ENCODE measurements at regions of chr11 and their contacts with region 1.

Region 1: GRCh38 chr11:72752088-72752914 is at the start of gene ARAP1:
- DNase-seq: peak; percentile 67
- H3K4me3 Mint-ChIP-seq: peak within 1 kb of the TSS; percentile 91
- H3K27ac Mint-ChIP-seq: peak within 1 kb of the TSS; percentile 91
- H3K4me1 Mint-ChIP-seq: peaks cover 42% of the 10 kb centered on the region
- H3K27me3 Mint-ChIP-seq: no peaks in the 10 kb centered on the region
- total RNA-seq, gene ARAP1: 78.8 and 88.6 TPM in 2 replicates

Region 2: DNA sequence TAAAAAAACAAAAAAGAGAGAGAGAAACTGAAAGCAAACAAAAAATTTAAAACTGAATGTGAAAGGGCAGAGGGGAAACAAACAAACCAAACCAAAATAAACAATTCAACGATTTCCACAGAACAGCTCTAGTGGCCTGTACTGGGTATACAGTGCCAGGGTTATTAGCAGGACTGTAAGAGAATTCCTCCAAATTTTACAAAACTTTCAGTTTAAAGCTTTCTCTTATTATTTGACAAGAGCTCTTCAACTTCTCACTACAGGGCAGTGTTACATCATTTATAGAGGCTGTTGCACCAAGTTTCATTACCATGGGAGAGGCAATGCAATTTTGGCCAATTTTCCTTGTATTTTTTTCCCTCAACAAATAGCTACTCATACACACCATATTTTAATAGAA is 273.6 kb before region 1 on chr11:
- intact Hi-C with region 1: no loop called
- DNase-seq: no peak
- H3K4me3 Mint-ChIP-seq: no peak overlapping the region
- H3K27ac Mint-ChIP-seq: no peak overlapping the region
- H3K4me1 Mint-ChIP-seq: peaks cover 4% of the 10 kb centered on the region
- H3K27me3 Mint-ChIP-seq: peaks cover 15% of the 10 kb centered on the region

Region 3: DNA sequence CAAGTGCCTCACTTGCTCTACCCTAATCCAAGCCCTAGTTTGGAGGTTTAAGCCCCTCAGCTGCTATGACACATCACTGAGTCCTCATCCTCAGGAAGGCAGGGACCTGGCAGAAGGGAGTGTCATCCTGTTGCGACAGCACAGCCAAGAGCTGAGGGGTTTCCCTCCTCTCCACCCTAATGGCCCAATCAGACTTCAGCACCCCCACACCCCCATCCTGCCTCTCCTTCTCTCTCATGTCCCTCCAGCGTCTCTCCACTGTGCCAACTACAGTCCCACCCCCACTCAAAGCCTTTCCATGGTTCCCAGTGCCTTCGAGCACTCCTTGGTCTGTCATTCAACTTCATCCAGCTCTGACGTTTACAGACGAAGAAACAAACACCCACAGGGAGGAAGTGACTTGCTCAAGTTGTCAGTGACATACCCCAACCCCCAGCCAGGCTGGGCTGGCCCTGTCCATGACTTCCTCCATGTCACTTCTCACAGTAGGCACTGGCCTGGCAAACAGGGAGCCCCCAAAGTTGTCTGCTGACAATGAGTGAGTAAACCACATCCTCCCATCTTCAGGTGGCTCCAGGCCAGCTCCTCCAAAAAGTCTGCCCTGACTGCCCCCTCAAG is 15.7 kb before region 1 on chr11:
- intact Hi-C with region 1: loop called (anchors 1 kb)
- DNase-seq: peak; percentile 64
- H3K4me3 Mint-ChIP-seq: peak overlapping the region; percentile 67
- H3K27ac Mint-ChIP-seq: peak overlapping the region; percentile 99
- H3K4me1 Mint-ChIP-seq: peaks cover 47% of the 10 kb centered on the region
- H3K27me3 Mint-ChIP-seq: no peaks in the 10 kb centered on the region

Region 4: GRCh38 chr11:72762641-72763304 is 10.5 kb after region 1 on chr11:
- intact Hi-C with region 1: loop called (anchors 1 kb)
- DNase-seq: no peak
- H3K4me3 Mint-ChIP-seq: peak overlapping the region; percentile 27
- H3K27ac Mint-ChIP-seq: peak overlapping the region; percentile 25
- H3K4me1 Mint-ChIP-seq: peaks cover 32% of the 10 kb centered on the region
- H3K27me3 Mint-ChIP-seq: no peaks in the 10 kb centered on the region

Region 5: GRCh38 chr11:72772978-72773690 is 20.8 kb after region 1 on chr11:
- intact Hi-C with region 1: no loop called
- DNase-seq: no peak
- H3K4me3 Mint-ChIP-seq: no peak overlapping the region
- H3K27ac Mint-ChIP-seq: no peak overlapping the region
- H3K4me1 Mint-ChIP-seq: peaks cover 7% of the 10 kb centered on the region
- H3K27me3 Mint-ChIP-seq: peaks cover 5% of the 10 kb centered on the region

Region 6: GRCh38 chr11:72885749-72886609 is 133.7 kb after region 1 on chr11:
- intact Hi-C with region 1: no loop called
- DNase-seq: no peak
- H3K4me3 Mint-ChIP-seq: no peak overlapping the region
- H3K27ac Mint-ChIP-seq: no peak overlapping the region
- H3K4me1 Mint-ChIP-seq: peaks cover 10% of the 10 kb centered on the region
- H3K27me3 Mint-ChIP-seq: no peaks in the 10 kb centered on the region

Region 7: DNA sequence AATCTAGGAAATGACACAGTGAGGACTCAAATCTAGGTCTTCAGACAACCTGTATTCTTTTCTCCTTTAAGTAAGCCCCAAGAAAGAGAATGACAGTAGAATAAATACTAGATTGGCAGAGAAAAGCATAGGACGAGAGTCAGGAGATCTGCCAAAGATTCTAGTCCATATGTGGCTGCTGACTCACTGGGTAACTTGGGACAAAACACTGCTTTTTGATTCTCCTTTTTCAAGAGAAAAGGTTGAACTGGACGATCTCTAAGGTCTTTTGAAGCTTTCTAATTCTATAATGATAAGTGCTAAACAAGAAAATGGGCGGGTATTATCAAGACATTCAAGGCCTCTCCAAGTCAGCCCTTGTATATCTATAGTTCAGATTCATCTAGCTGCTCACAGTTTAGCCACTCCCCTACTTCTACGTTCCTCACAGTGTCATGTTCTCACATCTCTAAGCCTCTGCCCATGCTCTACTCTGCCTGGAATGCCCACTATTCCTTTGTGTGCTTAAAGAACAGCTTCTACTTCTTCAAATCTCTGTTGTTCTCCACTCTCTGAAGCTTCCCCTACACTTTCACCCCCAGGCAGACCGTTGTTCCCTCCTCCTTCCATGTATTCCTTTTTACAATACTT is 676.9 kb after region 1 on chr11:
- intact Hi-C with region 1: no loop called
- DNase-seq: no peak
- H3K4me3 Mint-ChIP-seq: no peak overlapping the region
- H3K27ac Mint-ChIP-seq: no peak overlapping the region
- H3K4me1 Mint-ChIP-seq: peaks cover 4% of the 10 kb centered on the region
- H3K27me3 Mint-ChIP-seq: no peaks in the 10 kb centered on the region